Mammary epithelial cell (primary cell): ENCODE measurements at regions of chr5 and their contacts with region 1.

Region 1: DNA sequence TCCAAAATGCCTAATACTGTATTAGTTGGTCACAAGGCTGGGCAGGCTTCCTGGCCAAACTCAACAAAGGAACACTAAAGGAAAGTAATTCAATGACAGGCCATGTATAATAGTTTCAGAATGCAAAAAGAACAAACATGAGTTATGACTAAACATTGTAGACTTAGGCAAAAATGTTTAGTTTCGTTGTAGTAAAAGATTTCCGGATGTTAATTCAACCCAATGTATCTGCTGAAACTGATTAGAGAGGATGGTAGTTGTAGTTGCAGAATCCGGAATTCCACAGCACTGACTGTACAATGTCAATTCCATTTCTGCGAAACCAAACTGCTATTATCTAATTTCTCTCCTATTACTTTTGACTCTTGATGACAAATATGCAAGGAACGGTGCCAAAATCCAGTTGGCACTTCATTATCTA is 117.9 kb upstream of the FST start:
- DNase-seq: peak; percentile 99
- H3K4me3 ChIP-seq: no peak overlapping the region
- H3K27ac ChIP-seq: peak overlapping the region; percentile 100
- H3K4me1 ChIP-seq: peaks cover 56% of the 10 kb centered on the region
- H3K27me3 ChIP-seq: no peaks in the 10 kb centered on the region
- CTCF ChIP-seq: no peak

Region 2: GRCh38 chr5:53249529-53250200 is 112.9 kb before region 1 on chr5:
- CTCF ChIA-PET with region 1: no interaction called
- dilution Hi-C with region 1: loop called (anchors 5 kb)
- in situ Hi-C with region 1: no loop called
- intact Hi-C with region 1: loop called (anchors 5 kb)
- DNase-seq: peak; percentile 87
- H3K4me3 ChIP-seq: no peak overlapping the region
- H3K27ac ChIP-seq: peak overlapping the region; percentile 98
- H3K4me1 ChIP-seq: peaks cover 77% of the 10 kb centered on the region
- H3K27me3 ChIP-seq: no peaks in the 10 kb centered on the region
- CTCF ChIP-seq: no peak

Region 3: GRCh38 chr5:53262348-53262970 is 100.1 kb before region 1 on chr5:
- CTCF ChIA-PET with region 1: no interaction called
- dilution Hi-C with region 1: no loop called
- in situ Hi-C with region 1: no loop called
- intact Hi-C with region 1: loop called (anchors 1 kb)
- DNase-seq: peak; percentile 60
- H3K4me3 ChIP-seq: no peak overlapping the region
- H3K27ac ChIP-seq: peak overlapping the region; percentile 48
- H3K4me1 ChIP-seq: peaks cover 44% of the 10 kb centered on the region
- H3K27me3 ChIP-seq: no peaks in the 10 kb centered on the region
- CTCF ChIP-seq: peak; percentile 63 to 68

Region 4: GRCh38 chr5:53318303-53318702 is 44.2 kb before region 1 on chr5:
- CTCF ChIA-PET with region 1: no interaction called
- dilution Hi-C with region 1: no loop called
- in situ Hi-C with region 1: loop called in 1 of 2 experiments (anchors 5 kb)
- intact Hi-C with region 1: loop called (anchors 1 kb)
- DNase-seq: peak; percentile 49
- H3K4me3 ChIP-seq: no peak overlapping the region
- H3K27ac ChIP-seq: peak overlapping the region; percentile 99
- H3K4me1 ChIP-seq: peaks cover 50% of the 10 kb centered on the region
- H3K27me3 ChIP-seq: no peaks in the 10 kb centered on the region
- CTCF ChIP-seq: peak; percentile 35 to 61

Region 5: GRCh38 chr5:53323943-53324642 is 38.4 kb before region 1 on chr5:
- CTCF ChIA-PET with region 1: no interaction called
- dilution Hi-C with region 1: no loop called
- in situ Hi-C with region 1: loop called in 1 of 2 experiments (anchors 5 kb)
- intact Hi-C with region 1: loop called (anchors 1 kb)
- DNase-seq: peak; percentile 99
- H3K4me3 ChIP-seq: no peak overlapping the region
- H3K27ac ChIP-seq: peak overlapping the region; percentile 99
- H3K4me1 ChIP-seq: peaks cover 78% of the 10 kb centered on the region
- H3K27me3 ChIP-seq: no peaks in the 10 kb centered on the region
- CTCF ChIP-seq: no peak

Region 6: GRCh38 chr5:53343187-53343586 is 19.3 kb before region 1 on chr5:
- CTCF ChIA-PET with region 1: no interaction called
- dilution Hi-C with region 1: no loop called
- in situ Hi-C with region 1: no loop called
- intact Hi-C with region 1: loop called (anchors 1 kb)
- DNase-seq: peak; percentile 99
- H3K4me3 ChIP-seq: no peak overlapping the region
- H3K27ac ChIP-seq: peak overlapping the region; percentile 81
- H3K4me1 ChIP-seq: peaks cover 46% of the 10 kb centered on the region
- H3K27me3 ChIP-seq: no peaks in the 10 kb centered on the region
- CTCF ChIP-seq: no peak

Region 7: GRCh38 chr5:53418844-53419646 is 56.5 kb after region 1 on chr5:
- CTCF ChIA-PET with region 1: no interaction called
- dilution Hi-C with region 1: loop called (anchors 10 kb)
- in situ Hi-C with region 1: loop called (anchors 10 kb)
- intact Hi-C with region 1: loop called (anchors 1 kb)
- DNase-seq: peak; percentile 96
- H3K4me3 ChIP-seq: no peak overlapping the region
- H3K27ac ChIP-seq: peak overlapping the region; percentile 100
- H3K4me1 ChIP-seq: peaks cover 47% of the 10 kb centered on the region
- H3K27me3 ChIP-seq: no peaks in the 10 kb centered on the region
- CTCF ChIP-seq: no peak